Activated CD8-positive, alpha-beta T cell treated with anti-CD3 and anti-CD28 coated beads for 36 hours (primary cell): ENCODE measurements at regions of chr12 and their contacts with region 1.

Region 1: DNA sequence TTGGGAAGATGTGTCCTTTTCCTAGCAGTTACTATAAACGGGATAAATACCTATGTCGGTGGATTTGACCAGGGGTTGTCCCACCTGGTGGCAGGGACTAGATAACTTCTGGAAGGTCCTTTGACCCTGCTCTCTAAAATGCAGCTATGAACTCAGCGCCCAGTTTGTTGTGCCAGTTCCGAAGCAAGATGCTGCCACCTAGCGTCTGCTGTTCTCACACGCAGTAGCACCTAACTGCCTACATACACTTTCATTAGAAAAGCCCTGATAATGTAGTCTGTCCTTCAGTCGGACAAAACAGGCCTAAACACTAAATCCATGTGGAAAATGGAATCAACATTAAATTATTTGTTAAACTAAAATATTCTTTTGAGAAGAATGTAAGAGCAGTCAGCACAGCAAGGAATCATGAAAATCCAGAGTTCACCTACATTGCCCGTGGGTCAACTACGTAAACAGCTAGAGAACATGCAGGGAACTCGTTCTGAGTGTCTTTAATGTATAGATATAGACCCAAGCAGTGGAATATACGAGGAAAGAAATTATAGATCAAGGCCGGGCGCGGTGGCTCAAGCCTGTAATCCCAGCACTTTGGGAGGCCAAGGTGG is 51.1 kb upstream of the CRACR2A start:
- DNase-seq: peak; percentile 86
- ATAC-seq: peak; percentile 74
- H3K4me3 Mint-ChIP-seq: no peak overlapping the region
- H3K27ac Mint-ChIP-seq: no peak overlapping the region
- H3K4me1 Mint-ChIP-seq: peaks cover 10% of the 10 kb centered on the region
- H3K27me3 Mint-ChIP-seq: no peaks in the 10 kb centered on the region
- CTCF ChIP-seq: peak; percentile 92

Region 2: DNA sequence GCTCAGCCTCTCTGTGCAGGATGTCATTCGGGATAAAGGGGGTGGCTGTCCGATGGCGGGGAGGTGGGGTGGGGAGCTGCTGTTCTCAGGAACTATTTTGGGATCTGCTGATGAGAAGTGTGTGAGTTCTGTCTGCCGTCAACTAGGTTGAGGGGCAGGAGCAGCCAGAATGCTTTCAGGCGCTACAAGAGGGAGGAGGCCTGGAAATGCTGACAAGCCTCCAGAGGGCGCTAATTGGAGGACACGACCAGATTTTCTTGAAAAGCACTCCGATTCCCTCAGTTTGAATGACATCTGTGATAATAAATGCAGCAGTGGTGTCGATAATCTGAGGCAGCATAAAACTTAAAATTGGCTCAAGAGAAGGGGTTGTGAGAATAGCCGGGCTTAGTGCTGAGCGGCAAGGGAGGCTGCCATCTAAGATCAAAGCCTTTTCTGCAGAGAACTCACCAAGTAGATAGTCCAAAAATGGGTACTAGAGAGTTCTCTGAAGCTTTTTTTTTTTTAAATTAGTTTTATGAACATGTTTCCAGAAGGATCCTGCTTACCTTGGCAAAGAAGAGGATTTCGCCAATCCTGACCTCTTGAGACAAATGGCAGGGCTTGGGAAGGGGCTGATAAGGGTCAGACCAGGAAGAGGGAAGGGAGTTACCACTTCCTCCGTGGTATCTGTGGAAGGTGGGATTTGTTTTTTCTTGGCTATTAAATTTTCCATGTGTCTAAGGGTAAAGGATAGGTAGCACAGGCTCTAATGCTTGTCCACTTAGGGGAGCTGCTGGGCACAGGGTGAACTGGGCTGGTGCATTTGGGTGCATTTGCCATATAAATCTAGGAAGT is 145.4 kb before region 1 on chr12:
- CTCF ChIA-PET with region 1: interaction called, 15 read pairs
- POLR2A ChIA-PET with region 1: no interaction called
- intact Hi-C with region 1: no loop called
- DNase-seq: peak; percentile 55
- ATAC-seq: no peak
- H3K4me3 Mint-ChIP-seq: no peak overlapping the region
- H3K27ac Mint-ChIP-seq: no peak overlapping the region
- H3K4me1 Mint-ChIP-seq: no peaks in the 10 kb centered on the region
- H3K27me3 Mint-ChIP-seq: no peaks in the 10 kb centered on the region
- CTCF ChIP-seq: peak; percentile 47

Region 3: GRCh38 chr12:3820122-3820521 is 16.2 kb after region 1 on chr12:
- CTCF ChIA-PET with region 1: interaction called, 10 read pairs
- POLR2A ChIA-PET with region 1: no interaction called
- intact Hi-C with region 1: no loop called
- DNase-seq: no peak
- ATAC-seq: peak; percentile 77
- H3K4me3 Mint-ChIP-seq: no peak overlapping the region
- H3K27ac Mint-ChIP-seq: no peak overlapping the region
- H3K4me1 Mint-ChIP-seq: no peaks in the 10 kb centered on the region
- H3K27me3 Mint-ChIP-seq: no peaks in the 10 kb centered on the region
- CTCF ChIP-seq: no peak

Region 4: DNA sequence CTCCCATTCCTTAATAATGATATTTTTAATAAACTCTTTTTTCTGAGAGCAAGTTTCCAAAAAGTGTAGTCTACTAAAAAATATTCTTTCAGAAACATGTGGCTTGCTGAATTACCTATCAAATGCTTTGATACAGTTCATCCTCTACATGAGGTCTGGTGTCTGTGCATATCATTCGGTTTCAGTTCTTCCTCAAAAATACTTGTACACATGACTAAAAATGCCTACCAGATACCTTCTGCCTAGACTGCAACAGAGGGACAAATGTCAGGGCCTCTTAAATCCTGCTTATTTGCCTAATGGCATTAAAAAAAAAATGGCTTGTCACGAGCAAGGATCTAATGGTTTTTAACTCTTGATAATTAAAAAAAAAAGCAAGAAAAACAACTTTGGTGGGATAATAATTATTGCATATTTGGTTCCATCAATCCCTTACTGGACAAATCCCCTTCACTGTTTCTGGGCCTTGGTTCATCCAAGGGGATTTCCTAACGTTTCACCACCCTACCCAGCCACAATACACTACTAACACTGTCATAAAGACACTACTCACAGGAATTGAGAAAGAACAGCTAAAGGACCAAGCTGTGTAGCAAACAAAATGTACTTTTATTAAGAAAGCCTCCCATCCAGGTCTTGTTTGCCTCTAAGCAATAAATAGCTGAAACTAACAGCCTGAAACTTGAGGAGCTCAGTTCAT is 23.5 kb after region 1 on chr12:
- CTCF ChIA-PET with region 1: interaction called, 19 read pairs
- POLR2A ChIA-PET with region 1: no interaction called
- intact Hi-C with region 1: no loop called
- DNase-seq: no peak
- ATAC-seq: no peak
- H3K4me3 Mint-ChIP-seq: no peak overlapping the region
- H3K27ac Mint-ChIP-seq: peak overlapping the region; percentile 27
- H3K4me1 Mint-ChIP-seq: peaks cover 6% of the 10 kb centered on the region
- H3K27me3 Mint-ChIP-seq: no peaks in the 10 kb centered on the region
- CTCF ChIP-seq: no peak

Region 5: GRCh38 chr12:3832738-3833137 is 28.8 kb after region 1 on chr12:
- CTCF ChIA-PET with region 1: interaction called, 19 read pairs
- POLR2A ChIA-PET with region 1: no interaction called
- intact Hi-C with region 1: no loop called
- DNase-seq: no peak
- ATAC-seq: no peak
- H3K4me3 Mint-ChIP-seq: no peak overlapping the region
- H3K27ac Mint-ChIP-seq: no peak overlapping the region
- H3K4me1 Mint-ChIP-seq: peaks cover 40% of the 10 kb centered on the region
- H3K27me3 Mint-ChIP-seq: no peaks in the 10 kb centered on the region
- CTCF ChIP-seq: no peak

Region 6: GRCh38 chr12:3920351-3921150 is 116.6 kb after region 1 on chr12:
- CTCF ChIA-PET with region 1: no interaction called
- POLR2A ChIA-PET with region 1: no interaction called
- intact Hi-C with region 1: no loop called
- DNase-seq: no peak
- ATAC-seq: no peak
- H3K4me3 Mint-ChIP-seq: no peak overlapping the region
- H3K27ac Mint-ChIP-seq: no peak overlapping the region
- H3K4me1 Mint-ChIP-seq: peaks cover 16% of the 10 kb centered on the region
- H3K27me3 Mint-ChIP-seq: no peaks in the 10 kb centered on the region
- CTCF ChIP-seq: no peak

Region 7: GRCh38 chr12:4221258-4221620 is 417.3 kb after region 1 on chr12:
- CTCF ChIA-PET with region 1: no interaction called
- POLR2A ChIA-PET with region 1: no interaction called
- intact Hi-C with region 1: no loop called
- DNase-seq: no peak
- ATAC-seq: no peak
- H3K4me3 Mint-ChIP-seq: no peak overlapping the region
- H3K27ac Mint-ChIP-seq: no peak overlapping the region
- H3K4me1 Mint-ChIP-seq: peaks cover 19% of the 10 kb centered on the region
- H3K27me3 Mint-ChIP-seq: peaks cover 2% of the 10 kb centered on the region
- CTCF ChIP-seq: no peak